GM10248 (cell line): ENCODE measurements at regions of chr19 and their contacts with region 1.

Region 1: GRCh38 chr19:29873024-29873800 is 61.4 kb downstream of the CCNE1 start:
- DNase-seq: peak; percentile 85
- CTCF ChIP-seq: peak; percentile 80

Region 2: GRCh38 chr19:29724102-29724641 is 149.0 kb before region 1 on chr19:
- CTCF ChIA-PET with region 1: interaction called, 70 read pairs
- POLR2A ChIA-PET with region 1: no interaction called
- DNase-seq: no peak
- CTCF ChIP-seq: no peak

Region 3: DNA sequence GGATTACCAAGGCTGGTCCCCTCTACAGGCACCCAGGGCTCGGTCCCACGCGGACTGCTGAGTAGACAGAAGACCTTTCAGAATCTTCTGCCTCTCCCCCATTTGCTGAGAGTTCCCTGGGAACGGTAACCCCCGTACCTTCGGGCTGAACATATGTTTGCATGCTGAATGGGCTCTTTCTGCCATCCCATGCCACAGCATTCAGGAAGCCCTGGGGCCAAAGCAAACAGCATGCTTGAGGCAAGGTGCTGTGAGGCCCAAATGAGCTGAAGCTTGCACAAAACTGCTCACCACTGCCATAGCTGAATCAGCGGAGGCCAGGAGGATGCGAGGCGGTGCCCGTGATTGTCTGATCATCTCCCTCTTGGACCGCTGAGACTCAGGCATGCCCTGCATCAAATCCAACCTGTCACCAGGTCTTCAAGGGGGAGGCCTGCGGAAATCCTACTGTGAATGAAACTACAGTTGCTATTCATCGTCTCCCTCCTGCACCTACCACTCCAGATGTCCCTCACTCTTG is 141.8 kb before region 1 on chr19:
- CTCF ChIA-PET with region 1: interaction called, 70 read pairs
- POLR2A ChIA-PET with region 1: no interaction called
- DNase-seq: no peak
- CTCF ChIP-seq: no peak

Region 4: DNA sequence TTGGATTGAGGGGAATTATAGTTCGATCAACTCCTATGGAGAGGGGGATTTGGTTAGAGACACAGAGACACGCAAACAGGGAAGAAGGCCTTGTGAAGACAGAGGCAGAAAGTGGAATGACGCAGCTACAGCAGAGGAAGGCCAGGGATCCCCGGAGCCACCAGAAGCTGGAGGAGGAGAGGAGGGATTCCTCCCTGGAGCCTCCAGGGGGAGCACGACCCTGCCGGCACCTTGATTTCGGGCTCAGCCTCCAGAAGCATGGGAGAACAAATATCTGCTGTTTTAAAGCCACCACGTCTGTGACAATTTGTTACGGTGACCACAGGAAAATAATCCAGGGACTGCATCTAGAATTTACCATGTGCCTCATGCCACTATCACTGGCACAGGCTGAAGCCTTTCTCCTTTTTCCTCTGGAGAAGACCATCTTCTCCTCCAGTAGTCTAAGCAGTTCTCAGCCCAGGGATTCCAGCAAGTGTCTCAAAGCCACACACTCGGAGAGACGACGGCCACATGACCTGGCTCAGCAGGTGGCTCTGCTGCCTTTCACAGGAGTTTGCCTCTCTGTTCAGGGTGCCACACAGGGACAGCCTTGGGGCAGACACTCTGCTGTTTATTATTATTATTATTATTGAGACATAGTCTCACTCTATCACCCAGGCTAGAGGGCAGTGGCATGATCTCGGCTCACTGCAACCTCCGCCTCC is 101.4 kb before region 1 on chr19:
- CTCF ChIA-PET with region 1: interaction called, 53 read pairs
- POLR2A ChIA-PET with region 1: no interaction called
- DNase-seq: peak; percentile 57
- CTCF ChIP-seq: peak; percentile 55

Region 5: DNA sequence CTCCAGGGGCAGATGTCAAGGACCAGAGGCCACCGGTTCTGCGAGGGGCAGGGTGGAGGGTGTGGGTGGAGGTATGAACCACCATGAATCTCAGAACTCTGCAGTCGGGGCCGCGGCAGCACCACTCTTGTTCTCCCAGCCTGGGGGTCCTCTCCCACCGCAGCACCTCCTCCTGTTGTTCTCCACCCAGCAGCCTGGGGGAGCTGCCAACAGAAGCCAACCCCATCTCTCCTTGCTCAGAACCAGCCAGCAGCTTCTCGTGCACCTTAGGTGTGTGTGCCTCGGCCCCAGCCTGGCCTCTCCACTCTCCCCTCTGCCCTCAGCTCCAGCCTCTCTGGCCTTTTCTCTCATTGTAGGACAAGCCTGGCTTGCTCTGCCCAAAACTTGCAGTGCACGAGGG is 93.3 kb before region 1 on chr19:
- CTCF ChIA-PET with region 1: interaction called, 10 read pairs
- POLR2A ChIA-PET with region 1: no interaction called
- DNase-seq: no peak
- CTCF ChIP-seq: no peak

Region 6: DNA sequence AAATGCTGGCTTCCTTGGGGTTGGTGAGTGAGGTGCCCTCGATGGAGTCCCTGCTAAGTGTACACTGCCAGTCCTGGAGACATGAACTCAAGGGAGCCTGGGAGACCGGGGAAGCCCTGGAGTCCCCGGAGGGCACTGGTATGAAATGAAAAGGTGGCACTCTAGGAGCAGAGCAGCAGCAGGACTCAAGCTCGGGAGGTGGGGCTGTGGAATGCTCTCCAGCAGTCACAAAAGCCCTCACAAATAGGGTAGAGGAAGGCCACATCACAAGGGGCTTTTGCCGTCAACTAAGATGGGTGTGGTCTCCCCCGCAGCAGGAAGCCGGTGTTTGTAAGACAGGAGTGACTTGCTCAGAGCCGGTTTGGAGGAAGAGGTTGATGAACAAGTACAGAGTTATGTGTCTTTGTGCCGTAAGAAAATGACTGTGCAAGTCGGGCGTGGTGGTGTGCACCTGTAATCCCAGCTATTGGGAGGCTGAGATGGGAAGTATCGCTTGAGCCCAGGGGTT is 42.1 kb before region 1 on chr19:
- CTCF ChIA-PET with region 1: no interaction called
- POLR2A ChIA-PET with region 1: no interaction called
- DNase-seq: no peak
- CTCF ChIP-seq: no peak

Region 7: GRCh38 chr19:29858000-29858596 is 15.1 kb before region 1 on chr19:
- CTCF ChIA-PET with region 1: interaction called, 43 read pairs
- POLR2A ChIA-PET with region 1: no interaction called
- DNase-seq: peak; percentile 72
- CTCF ChIP-seq: peak; percentile 76

Region 8: GRCh38 chr19:29956855-29957254 is 83.6 kb after region 1 on chr19:
- CTCF ChIA-PET with region 1: no interaction called
- POLR2A ChIA-PET with region 1: no interaction called
- DNase-seq: no peak
- CTCF ChIP-seq: no peak